HEK293 (cell line): ENCODE measurements at regions of chr11 and their contacts with region 1.

Region 1: DNA sequence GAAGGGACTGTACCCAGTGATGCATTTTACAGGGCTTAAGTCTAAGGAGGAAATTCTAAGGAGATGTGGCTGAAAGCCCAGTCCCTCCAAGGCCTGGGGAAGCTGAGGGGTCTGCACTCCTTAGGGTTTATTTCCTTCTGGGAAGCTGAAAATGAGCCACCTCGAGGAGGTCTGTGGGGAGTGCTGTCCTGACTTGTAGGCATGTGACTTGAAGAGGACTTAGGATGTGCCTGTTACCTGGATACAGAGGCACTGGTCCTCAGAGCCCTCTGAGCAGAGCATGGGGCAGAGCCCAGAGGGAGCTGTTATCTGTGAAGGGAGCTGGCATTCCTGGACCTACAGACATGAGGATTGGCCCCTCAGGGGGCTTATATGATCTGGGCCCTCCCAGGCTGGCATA is 77.1 kb downstream of the TP53I11 start:
- H3K4me3 ChIP-seq: no peak overlapping the region
- H3K27ac ChIP-seq: no peak overlapping the region
- H3K4me1 ChIP-seq: no peaks in the 10 kb centered on the region
- CTCF ChIP-seq: no peak

Region 2: DNA sequence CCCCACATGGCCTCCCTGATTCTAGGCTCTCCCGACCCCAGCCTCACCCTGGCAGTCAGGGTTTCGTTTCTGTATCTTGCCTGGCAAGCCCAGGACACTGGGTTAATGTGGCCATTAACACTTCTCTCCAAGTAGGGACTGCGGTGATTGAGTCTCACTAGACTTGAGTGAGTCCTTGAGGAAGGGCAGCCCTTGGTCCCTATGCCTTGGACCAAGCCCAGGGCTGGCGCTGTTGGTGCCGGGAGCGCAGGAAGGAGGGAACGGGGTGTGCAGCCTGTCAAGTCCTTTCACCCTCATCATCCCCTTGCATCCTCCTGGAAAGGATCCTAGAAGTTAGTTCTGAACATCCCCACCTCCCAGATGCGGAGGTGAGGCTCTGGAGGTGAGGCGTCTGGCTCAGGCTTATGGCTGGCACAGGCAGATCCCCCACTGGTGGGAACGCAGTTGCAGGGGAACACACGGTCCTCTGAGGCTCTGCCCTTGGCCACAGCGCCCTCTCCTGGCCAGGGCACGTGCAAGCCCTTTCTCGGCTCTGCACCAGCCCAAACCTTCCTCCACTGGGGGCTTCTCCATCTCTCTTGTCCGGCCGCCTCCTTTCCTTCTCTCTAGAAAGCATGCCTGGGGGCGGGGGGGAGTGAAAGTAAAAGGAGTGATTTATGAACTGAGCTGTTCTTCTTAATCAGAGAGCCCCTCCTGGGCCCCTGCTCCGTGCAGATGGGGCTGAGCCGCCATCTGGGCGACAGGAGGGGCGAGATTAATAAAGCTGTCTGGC is 20.5 kb after region 1 on chr11:
- CTCF ChIA-PET with region 1: interaction called, 11 read pairs
- POLR2A ChIA-PET with region 1: no interaction called
- H3K4me3 ChIP-seq: no peak overlapping the region
- H3K27ac ChIP-seq: no peak overlapping the region
- H3K4me1 ChIP-seq: no peaks in the 10 kb centered on the region
- CTCF ChIP-seq: peak; percentile 76

Region 3: GRCh38 chr11:45079943-45080719 is 206.6 kb after region 1 on chr11:
- CTCF ChIA-PET with region 1: no interaction called
- POLR2A ChIA-PET with region 1: no interaction called
- H3K4me3 ChIP-seq: no peak overlapping the region
- H3K27ac ChIP-seq: no peak overlapping the region
- H3K4me1 ChIP-seq: no peaks in the 10 kb centered on the region
- CTCF ChIP-seq: no peak